Heart right ventricle (tissue), 16 donors: ENCODE measurements at regions of chr13 and their contacts with region 1.

Region 1: DNA sequence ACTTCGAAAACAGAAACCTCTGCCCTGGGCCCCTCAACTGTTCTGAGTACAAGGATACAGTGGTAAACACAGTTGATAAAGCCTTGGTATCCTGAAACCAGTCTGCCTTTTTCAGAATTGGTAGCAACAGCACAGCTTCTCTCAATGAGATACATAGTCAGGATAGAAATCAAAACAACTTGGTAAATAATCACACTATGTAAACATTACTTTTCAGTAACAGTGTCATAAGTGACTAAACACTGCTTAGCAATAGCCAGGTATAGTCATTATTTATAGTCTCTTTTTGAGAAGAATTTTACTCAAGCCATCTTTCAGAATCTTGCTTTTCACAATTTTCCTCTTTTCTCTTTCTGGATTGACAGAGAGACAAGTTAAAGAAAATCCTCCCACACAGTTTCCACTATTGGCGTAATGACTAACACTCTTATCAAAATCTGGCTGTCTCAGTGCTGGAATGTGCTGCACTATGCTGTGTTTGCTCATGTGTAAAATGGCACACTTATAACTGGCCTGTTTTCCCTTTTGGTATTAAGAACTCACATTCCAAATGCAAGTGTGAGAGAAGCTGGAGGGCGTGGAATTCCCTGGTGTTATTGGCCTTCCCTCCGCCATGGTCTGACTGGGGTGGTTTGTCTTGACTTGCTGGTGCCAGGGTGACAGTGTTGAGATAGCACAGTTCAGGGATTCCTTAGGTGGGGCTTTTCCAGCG is 368.8 kb downstream of the TDRD3 start:
- DNase-seq: no peak
- ATAC-seq: peak; percentile 67 to 97 (median 84)
- H3K4me3 ChIP-seq: no peak overlapping the region
- H3K27ac ChIP-seq: peak overlapping the region in 4 of 10 donors; percentile 21 to 48 (median 30)
- H3K4me1 ChIP-seq: peaks cover 0 to 16% (median 8%) of the 10 kb centered on the region in 9 donors
- H3K27me3 ChIP-seq: no peaks in the 10 kb centered on the region
- CTCF ChIP-seq: no peak

Region 2: GRCh38 chr13:60716313-60716712 is 49.5 kb before region 1 on chr13:
- intact Hi-C with region 1: no loop called
- DNase-seq: no peak
- ATAC-seq: no peak
- H3K4me3 ChIP-seq: no peak overlapping the region
- H3K27ac ChIP-seq: no peak overlapping the region
- H3K4me1 ChIP-seq: no peaks in the 10 kb centered on the region
- H3K27me3 ChIP-seq: no peaks in the 10 kb centered on the region
- CTCF ChIP-seq: no peak

Region 3: GRCh38 chr13:60755379-60756163 is 10.3 kb before region 1 on chr13:
- intact Hi-C with region 1: loop called in 1 of 10 experiments (anchors 1 kb)
- DNase-seq: no peak
- ATAC-seq: no peak
- H3K4me3 ChIP-seq: no peak overlapping the region
- H3K27ac ChIP-seq: no peak overlapping the region
- H3K4me1 ChIP-seq: peaks cover 0 to 10% (median 4%) of the 10 kb centered on the region in 9 donors
- H3K27me3 ChIP-seq: no peaks in the 10 kb centered on the region
- CTCF ChIP-seq: no peak

Region 4: GRCh38 chr13:60881507-60881906 is 115.7 kb after region 1 on chr13:
- intact Hi-C with region 1: no loop called
- DNase-seq: no peak
- ATAC-seq: no peak
- H3K4me3 ChIP-seq: no peak overlapping the region
- H3K27ac ChIP-seq: no peak overlapping the region
- H3K4me1 ChIP-seq: no peaks in the 10 kb centered on the region
- H3K27me3 ChIP-seq: no peaks in the 10 kb centered on the region
- CTCF ChIP-seq: no peak